ENCODE measurements at regions of chr11 and their contacts with region 1.

Region 1: GRCh38 chr11:44565211-44565952 is at the start of gene CD82:
- DNase-seq: peak; percentile 100
- ATAC-seq: peak; percentile 84
- H3K4me3 Mint-ChIP-seq: peak within 1 kb of the TSS; percentile 93
- H3K27ac Mint-ChIP-seq: peak within 1 kb of the TSS; percentile 92
- H3K4me1 Mint-ChIP-seq: peaks cover 54% of the 10 kb centered on the region
- H3K27me3 Mint-ChIP-seq: no peaks in the 10 kb centered on the region
- total RNA-seq, gene CD82: 239 to 272 TPM

Region 2: GRCh38 chr11:44530413-44531115 is 34.8 kb before region 1 on chr11:
- CTCF ChIA-PET with region 1: no interaction called
- POLR2A ChIA-PET with region 1: no interaction called
- intact Hi-C with region 1: loop called in 1 of 2 experiments (anchors 2 kb)
- DNase-seq: peak; percentile 51
- ATAC-seq: peak; percentile 92
- H3K4me3 Mint-ChIP-seq: no peak overlapping the region
- H3K27ac Mint-ChIP-seq: peak overlapping the region; percentile 86
- H3K4me1 Mint-ChIP-seq: peaks cover 33% of the 10 kb centered on the region
- H3K27me3 Mint-ChIP-seq: no peaks in the 10 kb centered on the region

Region 3: DNA sequence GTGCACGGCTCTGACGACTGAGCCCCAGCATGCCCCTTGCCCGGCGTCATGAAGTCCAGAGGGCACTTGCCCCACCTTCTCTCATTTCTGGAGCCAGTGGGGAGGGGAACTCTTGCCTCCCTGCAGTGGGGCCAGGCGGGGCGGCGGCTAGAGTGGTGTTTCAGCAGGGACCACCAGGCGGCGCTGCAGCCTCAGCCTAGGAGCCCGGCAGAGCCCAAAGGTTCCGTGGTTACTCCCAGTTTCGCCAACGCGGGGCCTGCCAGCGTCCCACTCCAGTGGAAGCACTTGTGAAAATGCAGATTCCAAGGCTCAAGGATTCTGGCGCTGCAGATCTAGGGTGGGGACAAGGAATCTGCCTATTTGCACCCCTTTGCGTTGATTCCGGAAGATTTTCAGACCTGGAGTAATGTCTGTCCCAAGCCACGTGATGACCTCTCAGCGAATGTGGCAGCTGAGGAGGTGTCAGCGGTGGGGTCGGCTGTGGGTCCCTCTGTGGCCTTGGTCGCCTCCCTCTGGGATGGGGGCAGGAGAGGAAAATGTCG is 55.8 kb after region 1 on chr11:
- CTCF ChIA-PET with region 1: interaction called, 36 read pairs
- POLR2A ChIA-PET with region 1: interaction called, 3 read pairs
- intact Hi-C with region 1: no loop called
- DNase-seq: peak; percentile 78
- ATAC-seq: peak; percentile 52
- H3K4me3 Mint-ChIP-seq: no peak overlapping the region
- H3K27ac Mint-ChIP-seq: no peak overlapping the region
- H3K4me1 Mint-ChIP-seq: peaks cover 38% of the 10 kb centered on the region
- H3K27me3 Mint-ChIP-seq: no peaks in the 10 kb centered on the region

Region 4: DNA sequence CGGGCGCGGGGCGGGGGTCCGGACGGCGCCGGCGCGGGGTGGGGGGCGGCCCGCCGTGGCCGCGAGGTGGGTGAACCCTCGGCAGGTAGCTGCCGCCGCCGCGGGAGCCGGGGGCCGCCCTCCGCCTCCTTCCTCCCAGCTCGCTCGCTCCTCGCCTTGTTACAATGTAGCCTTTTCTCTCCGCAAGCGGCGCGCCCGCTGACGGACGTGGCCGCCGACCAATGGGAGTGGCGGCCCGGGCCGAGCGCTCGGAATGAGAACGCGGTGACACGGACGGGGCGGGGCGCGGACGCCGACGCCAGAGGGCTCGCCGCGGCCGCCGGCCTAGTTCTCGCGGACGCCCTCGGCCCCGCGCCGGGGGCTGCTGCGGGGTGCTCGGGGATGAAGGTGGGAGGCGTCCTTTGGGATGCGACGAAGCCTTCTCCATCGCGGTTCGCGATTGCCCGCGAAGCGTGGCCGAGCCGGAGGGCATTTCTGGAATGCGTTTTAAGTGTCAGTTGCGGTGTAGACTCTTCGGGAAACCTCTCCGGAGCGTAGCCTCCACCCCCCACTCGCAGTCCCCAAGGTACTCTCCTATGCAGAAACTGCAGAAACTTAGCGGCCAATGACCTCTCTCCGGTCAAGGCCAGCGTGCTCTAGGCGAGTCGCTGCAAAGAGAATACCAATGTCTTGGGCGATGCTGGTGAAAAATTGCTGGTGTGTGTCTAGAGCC is 581.8 kb after region 1 on chr11:
- CTCF ChIA-PET with region 1: no interaction called
- POLR2A ChIA-PET with region 1: no interaction called
- intact Hi-C with region 1: loop called (anchors 2 to 5 kb)
- DNase-seq: peak; percentile 95
- ATAC-seq: peak; percentile 99
- H3K4me3 Mint-ChIP-seq: peak overlapping the region; percentile 81
- H3K27ac Mint-ChIP-seq: peak overlapping the region; percentile 74
- H3K4me1 Mint-ChIP-seq: peaks cover 19% of the 10 kb centered on the region
- H3K27me3 Mint-ChIP-seq: peaks cover 15% of the 10 kb centered on the region

Region 5: GRCh38 chr11:45917623-45918330 is 1352.4 kb after region 1 on chr11 and contains the start of gene PEX16:
- CTCF ChIA-PET with region 1: no interaction called
- POLR2A ChIA-PET with region 1: no interaction called
- intact Hi-C with region 1: loop called in 1 of 2 experiments (anchors 10 kb)
- DNase-seq: peak; percentile 97
- ATAC-seq: peak; percentile 94
- H3K4me3 Mint-ChIP-seq: peak within 1 kb of the TSS; percentile 96
- H3K27ac Mint-ChIP-seq: peak within 1 kb of the TSS; percentile 95
- H3K4me1 Mint-ChIP-seq: peaks cover 31% of the 10 kb centered on the region
- H3K27me3 Mint-ChIP-seq: peaks cover 3% of the 10 kb centered on the region
- total RNA-seq, gene PEX16: 28.1 to 33.4 TPM

Measured in activated CD4-positive, alpha-beta T cell treated with anti-CD3 and anti-CD28 coated beads for 36 hours (primary cell).